ENCODE measurements at regions of chr4 and their contacts with region 1.

Region 1: DNA sequence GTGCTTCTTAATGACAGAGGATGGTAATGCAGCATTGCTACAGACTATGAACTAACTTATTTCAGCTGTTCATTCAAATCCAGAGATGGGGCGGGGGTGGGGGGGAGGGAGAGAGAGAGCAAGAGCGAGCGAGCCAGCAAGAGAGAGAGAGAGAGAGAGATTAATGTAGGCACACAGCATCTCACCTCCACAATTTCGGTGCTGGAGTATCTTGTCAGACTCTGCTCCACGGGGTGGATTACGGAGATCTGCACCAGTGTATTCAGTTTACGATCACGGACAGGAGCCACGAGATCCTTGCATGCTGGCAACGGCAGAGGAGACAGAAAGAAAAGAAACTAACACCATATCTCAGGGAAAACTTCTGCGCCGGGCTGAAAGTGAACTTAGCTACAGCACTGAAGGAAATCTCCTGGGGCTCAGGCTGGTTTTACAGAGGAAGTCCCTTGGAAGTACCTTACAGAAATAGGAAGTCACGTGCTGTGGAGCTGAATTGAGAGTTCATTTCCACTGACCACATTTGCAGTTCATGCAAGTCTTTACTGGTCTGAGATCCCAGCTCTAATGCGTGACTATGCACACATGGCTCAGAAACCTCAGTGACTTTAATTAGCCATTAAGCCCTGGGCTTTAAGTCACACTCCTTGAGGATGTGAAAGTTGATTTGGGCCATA is 440.9 kb downstream of the INPP4B start:
- DNase-seq: peak; percentile 51
- H3K4me3 Mint-ChIP-seq: peak overlapping the region; percentile 97
- H3K27ac Mint-ChIP-seq: peak overlapping the region; percentile 99
- H3K4me1 Mint-ChIP-seq: peaks cover 78% of the 10 kb centered on the region
- H3K27me3 Mint-ChIP-seq: no peaks in the 10 kb centered on the region

Region 2: DNA sequence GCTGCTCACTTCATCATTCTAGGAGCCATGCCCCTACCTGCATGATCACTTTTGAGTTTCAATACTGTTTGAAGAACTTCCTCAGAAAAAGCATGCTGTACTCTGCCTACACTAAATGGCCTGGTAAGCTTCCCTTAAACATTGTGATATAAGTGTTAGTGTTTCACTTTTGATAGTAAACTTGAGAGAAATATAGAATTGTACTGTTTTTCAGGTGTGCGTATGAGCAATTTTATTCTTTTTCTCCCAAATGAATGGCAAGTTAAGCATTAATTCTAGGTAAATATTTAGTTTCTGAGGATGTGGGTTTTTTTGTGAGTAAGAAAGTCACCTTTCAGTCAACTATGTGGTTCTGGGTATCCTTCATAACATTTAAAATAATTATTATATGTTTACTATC is 284.2 kb before region 1 on chr4:
- intact Hi-C with region 1: loop called (anchors 5 kb)
- DNase-seq: no peak
- H3K4me3 Mint-ChIP-seq: no peak overlapping the region
- H3K27ac Mint-ChIP-seq: no peak overlapping the region
- H3K4me1 Mint-ChIP-seq: peaks cover 19% of the 10 kb centered on the region
- H3K27me3 Mint-ChIP-seq: no peaks in the 10 kb centered on the region

Region 3: GRCh38 chr4:142293536-142293935 is 111.6 kb before region 1 on chr4:
- intact Hi-C with region 1: loop called (anchors 1 kb)
- DNase-seq: no peak
- H3K4me3 Mint-ChIP-seq: no peak overlapping the region
- H3K27ac Mint-ChIP-seq: no peak overlapping the region
- H3K4me1 Mint-ChIP-seq: peaks cover 18% of the 10 kb centered on the region
- H3K27me3 Mint-ChIP-seq: no peaks in the 10 kb centered on the region

Region 4: DNA sequence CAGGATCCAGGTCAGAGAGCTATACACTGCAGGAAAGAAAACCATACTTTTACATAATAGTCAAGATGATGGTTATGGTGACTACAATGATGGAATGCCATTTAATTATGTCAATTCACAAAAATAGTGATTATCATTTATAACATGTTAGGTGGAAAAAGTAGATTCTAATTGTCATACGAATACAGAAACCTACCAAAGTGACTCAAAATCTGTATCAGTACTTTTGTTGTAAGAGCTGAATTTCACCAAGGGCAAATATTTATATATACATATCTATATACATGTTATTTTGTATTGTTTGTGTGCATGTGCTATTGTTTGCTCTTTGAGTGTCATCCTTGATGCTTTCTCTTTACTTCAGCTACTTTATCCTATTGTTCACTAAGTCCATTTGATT is 44.5 kb before region 1 on chr4:
- intact Hi-C with region 1: no loop called
- DNase-seq: no peak
- H3K4me3 Mint-ChIP-seq: no peak overlapping the region
- H3K27ac Mint-ChIP-seq: no peak overlapping the region
- H3K4me1 Mint-ChIP-seq: peaks cover 60% of the 10 kb centered on the region
- H3K27me3 Mint-ChIP-seq: no peaks in the 10 kb centered on the region

Region 5: DNA sequence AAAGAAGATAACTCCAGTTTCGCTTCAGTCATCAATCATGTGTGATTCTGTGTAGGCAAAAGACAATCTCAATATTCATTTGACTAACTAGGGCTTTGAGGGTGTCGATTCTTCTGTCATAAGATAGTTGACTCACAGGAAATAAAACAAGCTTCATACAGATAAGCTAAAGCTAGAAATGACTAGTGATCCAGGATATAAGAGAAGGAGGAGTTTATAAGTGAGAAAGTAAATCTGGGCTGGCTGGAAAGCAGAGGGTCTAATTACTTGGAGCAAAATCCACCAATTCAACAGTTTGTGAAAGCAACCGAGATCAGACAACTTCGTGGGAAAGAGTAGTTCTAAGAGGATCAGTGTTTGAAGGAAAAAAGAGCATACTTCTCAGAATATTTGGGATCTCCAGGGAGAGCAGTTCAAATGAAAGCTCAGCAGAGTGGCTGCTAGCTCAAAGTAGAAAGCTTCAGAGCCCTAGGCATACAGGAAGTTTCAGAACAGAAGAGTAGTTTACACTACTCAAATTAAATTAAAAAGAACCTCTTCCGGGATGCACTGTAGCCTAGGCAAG is 11.6 kb after region 1 on chr4:
- intact Hi-C with region 1: loop called (anchors 1 kb)
- DNase-seq: no peak
- H3K4me3 Mint-ChIP-seq: peak overlapping the region; percentile 50
- H3K27ac Mint-ChIP-seq: peak overlapping the region; percentile 91
- H3K4me1 Mint-ChIP-seq: peaks cover 33% of the 10 kb centered on the region
- H3K27me3 Mint-ChIP-seq: no peaks in the 10 kb centered on the region

Region 6: GRCh38 chr4:142840516-142841123 is 435.5 kb after region 1 on chr4:
- intact Hi-C with region 1: loop called (anchors 2 kb)
- DNase-seq: no peak
- H3K4me3 Mint-ChIP-seq: no peak overlapping the region
- H3K27ac Mint-ChIP-seq: no peak overlapping the region
- H3K4me1 Mint-ChIP-seq: peaks cover 11% of the 10 kb centered on the region
- H3K27me3 Mint-ChIP-seq: peaks cover 7% of the 10 kb centered on the region

Region 7: DNA sequence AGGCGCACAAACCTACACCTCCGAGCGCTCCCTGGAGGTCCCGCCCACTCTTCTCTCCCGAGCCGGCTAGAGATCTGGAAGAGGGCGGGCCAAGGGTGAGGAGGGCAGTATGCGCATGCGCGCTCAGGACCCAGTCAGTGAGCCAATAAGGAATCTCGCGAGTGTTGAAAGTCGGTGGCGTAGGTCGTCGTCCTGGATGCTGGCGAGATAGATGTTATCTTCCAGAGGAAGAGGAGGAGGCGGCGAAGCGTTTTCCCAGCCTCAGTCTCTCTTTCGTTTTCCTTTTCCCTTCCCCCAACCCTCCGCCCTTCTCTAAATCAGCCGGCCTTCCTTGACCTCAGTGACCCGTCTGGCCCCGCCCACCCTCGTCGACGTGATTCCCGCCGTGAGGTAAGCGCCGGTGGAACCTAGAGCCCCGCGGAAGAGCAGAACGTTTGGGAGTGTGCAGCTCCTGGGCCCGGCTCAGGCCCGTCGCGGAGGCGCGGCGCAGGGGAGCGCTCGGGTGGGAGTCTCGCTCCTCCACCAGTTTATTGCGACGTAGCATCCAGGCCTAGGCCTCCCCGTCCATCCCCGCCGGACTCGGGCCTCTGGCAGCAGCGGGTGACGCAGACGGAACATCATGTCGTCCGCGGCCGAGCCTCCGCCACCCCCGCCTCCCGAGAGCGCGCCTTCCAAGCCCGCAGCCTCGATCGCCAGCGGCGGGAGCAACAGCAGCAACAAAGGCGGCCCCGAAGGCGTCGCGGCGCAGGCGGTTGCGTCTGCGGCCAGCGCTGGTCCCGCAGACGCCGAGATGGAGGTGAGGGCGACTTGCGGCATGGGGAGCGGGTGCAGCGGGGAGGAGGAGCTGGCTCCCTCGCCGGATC is 1108.4 kb after region 1 on chr4 and contains the start of gene SMARCA5:
- intact Hi-C with region 1: loop called (anchors 5 kb)
- DNase-seq: peak; percentile 95
- H3K4me3 Mint-ChIP-seq: peak within 1 kb of the TSS; percentile 94
- H3K27ac Mint-ChIP-seq: peak within 1 kb of the TSS; percentile 93
- H3K4me1 Mint-ChIP-seq: peaks cover 29% of the 10 kb centered on the region
- H3K27me3 Mint-ChIP-seq: peaks cover 10% of the 10 kb centered on the region
- total RNA-seq, gene SMARCA5: 59.9 and 60.7 TPM in 2 replicates

Measured in activated T-helper 1 cell treated with anti-CD3 and anti-CD28 coated beads, Interleukin-12 subunit alpha, Interleukin-12 subunit beta, Interleukin-2, Interleukin-4 antibody, amounts not matched to agents 30 ng/mL and 10 ng/mL and 1 ng/mL, durations not matched to agents 14 hours and 24 hours and 36 hours (primary cell).